Psoas muscle (tissue), 8 donors: ENCODE measurements at regions of chr12 and their contacts with region 1.

Region 1: DNA sequence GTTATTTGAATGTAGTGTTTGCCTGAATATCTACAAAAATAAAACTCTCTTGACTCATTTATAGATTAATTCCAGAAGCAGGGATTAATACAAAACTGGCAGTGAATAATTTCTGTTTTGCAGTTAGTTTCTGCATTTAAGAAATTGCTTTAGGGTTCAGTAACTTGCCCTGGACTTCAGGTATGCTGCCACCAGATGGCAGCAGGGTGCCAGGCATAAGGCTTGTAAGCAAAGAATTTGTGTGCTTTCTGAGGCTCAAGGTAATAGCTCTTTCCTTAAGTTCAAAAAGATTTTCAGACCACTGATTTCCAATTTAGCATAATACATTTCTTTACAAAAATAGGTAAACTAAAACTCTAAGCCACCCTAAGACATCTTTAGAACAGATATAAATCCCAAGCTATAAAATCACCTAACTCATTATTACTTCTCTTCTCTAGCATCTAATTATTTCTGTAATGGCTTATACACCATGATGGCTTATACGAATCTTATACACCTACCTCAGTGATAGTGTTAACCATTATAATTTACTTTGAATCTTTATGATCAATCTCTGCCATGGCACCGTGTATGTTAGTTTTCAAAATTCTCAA is 398.3 kb downstream of the APAF1 start:
- DNase-seq: peak; percentile 54 to 65
- ATAC-seq: peak in 2 of 4 donors; percentile 64 to 65
- H3K4me3 ChIP-seq: no peak overlapping the region
- H3K27ac ChIP-seq: no peak overlapping the region
- H3K4me1 ChIP-seq: no peaks in the 10 kb centered on the region
- H3K27me3 ChIP-seq: no peaks in the 10 kb centered on the region
- CTCF ChIP-seq: peak; percentile 82

Region 2: DNA sequence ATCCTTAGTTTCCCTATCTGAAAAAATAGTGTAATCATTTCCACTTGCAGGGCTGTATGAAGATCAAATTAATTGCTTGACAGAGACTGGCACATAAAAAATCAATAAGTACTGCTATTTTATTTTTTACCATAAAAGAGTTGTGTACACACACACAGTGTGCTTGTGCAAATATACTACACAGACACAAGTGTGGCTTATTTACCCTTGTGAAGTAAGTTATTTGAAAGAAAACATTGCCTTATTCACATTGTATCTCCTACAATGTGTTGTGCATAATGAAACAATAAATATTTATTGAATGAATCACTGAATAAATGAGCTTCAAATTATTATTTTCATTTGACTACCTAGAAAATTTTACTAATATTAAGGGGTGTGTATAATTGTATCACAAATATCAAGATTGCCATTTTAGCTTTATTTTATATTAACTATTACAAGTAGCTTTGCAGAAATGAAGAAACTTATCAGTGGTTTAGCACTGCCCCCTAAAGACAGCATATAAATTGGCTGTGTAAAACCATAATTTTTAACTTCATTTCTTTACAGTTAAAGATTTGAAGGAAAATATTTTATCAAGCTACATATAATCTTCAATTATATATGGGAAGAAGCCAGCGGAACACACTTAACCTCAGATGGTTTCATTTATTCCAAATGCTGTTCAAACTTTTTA is 615.4 kb after region 1 on chr12:
- intact Hi-C with region 1: loop called in 1 of 2 experiments (anchors 10 kb)
- DNase-seq: no peak
- ATAC-seq: no peak
- H3K4me3 ChIP-seq: no peak overlapping the region
- H3K27ac ChIP-seq: no peak overlapping the region
- H3K4me1 ChIP-seq: no peaks in the 10 kb centered on the region
- H3K27me3 ChIP-seq: no peaks in the 10 kb centered on the region
- CTCF ChIP-seq: peak; percentile 20

Region 3: GRCh38 chr12:99767809-99768208 is 724.4 kb after region 1 on chr12:
- intact Hi-C with region 1: loop called (anchors 5 kb)
- DNase-seq: no peak
- ATAC-seq: no peak
- H3K4me3 ChIP-seq: peak overlapping the region; percentile 44
- H3K27ac ChIP-seq: no peak overlapping the region
- H3K4me1 ChIP-seq: no peaks in the 10 kb centered on the region
- H3K27me3 ChIP-seq: no peaks in the 10 kb centered on the region
- CTCF ChIP-seq: peak; percentile 44